Ascending aorta (tissue), 2 donors: ENCODE measurements at regions of chr5 and their contacts with region 1.

Region 1: GRCh38 chr5:73591102-73591695 is 25.7 kb downstream of the UTP15 start:
- DNase-seq: peak in 1 of 2 donors; percentile 66
- H3K4me3 ChIP-seq: no peak overlapping the region
- H3K27ac ChIP-seq: no peak overlapping the region
- H3K4me1 ChIP-seq: no peaks in the 10 kb centered on the region
- H3K27me3 ChIP-seq: no peaks in the 10 kb centered on the region
- CTCF ChIP-seq: peak; percentile 73 to 82 (median 78)

Region 2: DNA sequence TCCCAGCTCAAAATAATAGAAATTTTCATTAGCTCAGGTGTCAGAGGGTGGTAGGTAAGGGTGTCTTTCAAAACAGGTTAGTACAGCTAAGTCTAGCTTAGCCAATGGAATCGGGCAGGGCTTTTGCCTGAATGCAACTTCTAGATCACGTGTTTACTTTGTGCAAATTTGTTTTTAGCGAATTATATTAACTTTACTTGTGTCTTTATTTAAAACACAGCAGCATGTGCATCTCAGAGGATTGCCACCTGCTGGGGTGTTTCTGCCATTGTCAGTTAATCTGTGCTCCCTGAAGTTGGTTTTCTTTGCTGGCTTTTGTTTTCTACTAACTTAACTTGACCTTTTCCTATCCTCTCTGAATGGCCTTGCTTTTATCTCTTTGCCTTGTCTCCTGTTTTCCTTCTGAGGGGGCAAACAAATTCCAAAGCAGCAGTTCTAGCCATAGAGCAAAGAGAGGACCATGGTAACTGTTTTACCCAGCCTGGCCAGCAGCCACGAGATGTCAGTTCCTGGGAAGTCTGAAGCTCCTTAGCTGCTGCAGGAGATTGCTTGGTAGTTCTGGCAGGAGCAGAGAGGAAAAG is 102.4 kb after region 1 on chr5:
- intact Hi-C with region 1: loop called (anchors 5 kb)
- DNase-seq: no peak
- H3K4me3 ChIP-seq: no peak overlapping the region
- H3K27ac ChIP-seq: no peak overlapping the region
- H3K4me1 ChIP-seq: peaks cover 0 to 14% of the 10 kb centered on the region in 2 donors
- H3K27me3 ChIP-seq: no peaks in the 10 kb centered on the region
- CTCF ChIP-seq: peak; percentile 12 to 39 (median 24)

Region 3: DNA sequence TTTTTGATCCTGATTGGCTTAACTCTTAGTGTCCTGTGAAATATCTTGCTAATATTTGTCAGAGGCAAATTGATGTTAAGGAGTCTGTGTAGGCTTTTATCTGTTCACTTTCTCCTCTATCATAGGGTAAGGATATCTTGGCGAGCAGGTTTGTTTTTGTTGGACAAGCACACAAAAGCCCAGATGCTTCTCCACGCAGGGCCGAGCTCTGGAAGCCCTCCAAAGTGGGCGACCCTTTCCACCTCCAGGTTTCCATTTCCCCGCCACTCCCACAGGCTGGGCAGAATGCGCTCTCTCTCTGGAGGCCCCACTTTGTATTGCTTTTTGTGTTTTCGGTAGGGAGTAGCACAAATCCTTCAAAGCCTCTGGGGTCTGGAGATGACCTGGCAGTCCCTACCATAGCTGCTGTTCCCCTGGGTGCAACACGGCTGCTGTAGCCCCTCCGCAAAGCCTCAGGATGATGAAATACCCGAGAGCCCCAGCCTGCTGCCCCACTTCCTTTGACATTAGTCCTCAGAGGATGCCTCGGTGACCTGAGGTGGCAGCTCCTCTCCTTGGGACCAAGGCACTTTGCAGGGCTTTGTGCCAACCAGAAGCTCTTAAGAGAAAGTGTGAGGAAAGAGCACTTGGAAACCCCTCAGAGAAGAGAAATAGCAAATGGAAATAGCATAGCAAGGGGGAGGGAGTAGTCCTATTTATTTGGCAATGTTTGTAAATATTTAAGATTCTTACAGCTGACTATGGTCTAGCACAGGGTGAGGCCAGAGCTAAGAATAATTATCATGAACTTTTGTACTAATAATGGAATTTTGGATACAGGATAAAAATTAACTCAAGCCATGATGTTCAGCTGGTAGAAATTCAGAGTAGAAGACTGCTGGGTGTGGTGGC is 157.6 kb after region 1 on chr5:
- intact Hi-C with region 1: no loop called
- DNase-seq: no peak
- H3K4me3 ChIP-seq: peak overlapping the region; percentile 16 to 36
- H3K27ac ChIP-seq: peak overlapping the region; percentile 72 to 77
- H3K4me1 ChIP-seq: peaks cover 9 to 33% of the 10 kb centered on the region in 2 donors
- H3K27me3 ChIP-seq: no peaks in the 10 kb centered on the region
- CTCF ChIP-seq: no peak

Region 4: DNA sequence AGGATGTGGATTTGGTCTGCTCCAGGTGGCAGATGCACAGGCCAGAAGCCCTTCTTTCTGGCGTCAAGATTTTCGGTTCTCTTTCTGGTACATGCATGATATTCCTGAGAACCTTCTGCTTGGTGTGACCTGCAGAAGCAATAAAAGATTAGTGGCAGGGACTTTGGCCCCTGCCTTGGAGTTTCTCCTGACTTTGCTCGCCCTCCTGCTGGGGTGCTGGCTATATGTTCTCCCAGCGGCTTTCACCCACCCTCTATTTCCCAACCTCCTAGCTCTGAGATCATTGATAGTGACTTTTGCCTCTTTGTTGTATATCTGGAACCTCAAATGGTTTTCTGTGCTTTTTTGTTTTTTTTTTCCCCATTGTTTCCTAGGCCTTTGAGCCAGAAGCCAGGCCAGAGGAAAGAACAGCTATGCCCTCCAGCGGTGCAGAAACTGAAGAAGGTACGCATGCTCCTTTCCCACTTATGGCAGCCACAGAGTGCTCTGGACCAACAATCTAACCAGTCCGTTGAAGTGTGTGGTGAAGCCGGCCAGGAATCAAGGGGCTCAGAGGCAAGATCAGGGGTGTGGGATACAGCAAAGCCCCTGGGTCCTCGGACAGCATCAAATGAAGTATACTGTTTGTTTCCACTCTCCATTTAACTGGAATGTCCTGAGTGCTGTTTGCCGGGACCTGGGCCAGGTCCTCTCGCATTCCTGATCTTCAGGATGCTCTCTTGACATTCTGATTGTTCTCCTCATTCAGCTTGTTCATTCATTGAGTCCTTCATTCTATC is 189.3 kb after region 1 on chr5:
- intact Hi-C with region 1: no loop called
- DNase-seq: no peak
- H3K4me3 ChIP-seq: no peak overlapping the region
- H3K27ac ChIP-seq: no peak overlapping the region
- H3K4me1 ChIP-seq: no peaks in the 10 kb centered on the region
- H3K27me3 ChIP-seq: no peaks in the 10 kb centered on the region
- CTCF ChIP-seq: no peak

Region 5: GRCh38 chr5:73792687-73793320 is 201.6 kb after region 1 on chr5:
- intact Hi-C with region 1: loop called (anchors 1 kb)
- DNase-seq: peak in 1 of 2 donors; percentile 85
- H3K4me3 ChIP-seq: no peak overlapping the region
- H3K27ac ChIP-seq: no peak overlapping the region
- H3K4me1 ChIP-seq: peaks cover 0 to 5% of the 10 kb centered on the region in 2 donors
- H3K27me3 ChIP-seq: no peaks in the 10 kb centered on the region
- CTCF ChIP-seq: peak; percentile 89 to 96 (median 95)

Region 6: GRCh38 chr5:74648835-74649293 is 1057.7 kb after region 1 on chr5:
- intact Hi-C with region 1: loop called (anchors 5 kb)
- DNase-seq: no peak
- H3K4me3 ChIP-seq: peak overlapping the region in 1 of 2 donors; percentile 22
- H3K27ac ChIP-seq: no peak overlapping the region
- H3K4me1 ChIP-seq: peaks cover 0 to 18% of the 10 kb centered on the region in 2 donors
- H3K27me3 ChIP-seq: no peaks in the 10 kb centered on the region
- CTCF ChIP-seq: peak; percentile 62 to 76 (median 64)